ENCODE measurements at regions of chr3 and their contacts with region 1.

Region 1: GRCh38 chr3:149969940-149970715 is 567 bp downstream of the PFN2 start:
- DNase-seq: peak; percentile 75
- ATAC-seq: peak; percentile 27
- H3K4me3 ChIP-seq: peak overlapping the region; percentile 79
- H3K27ac ChIP-seq: peak overlapping the region; percentile 86
- H3K4me1 ChIP-seq: peaks cover 31% of the 10 kb centered on the region
- H3K27me3 ChIP-seq: no peaks in the 10 kb centered on the region
- CTCF ChIP-seq: no peak

Region 2: GRCh38 chr3:149170672-149171071 is 799.5 kb before region 1 on chr3:
- CTCF ChIA-PET with region 1: no interaction called
- POLR2A ChIA-PET with region 1: no interaction called
- intact Hi-C with region 1: no loop called
- DNase-seq: no peak
- ATAC-seq: no peak
- H3K4me3 ChIP-seq: no peak overlapping the region
- H3K27ac ChIP-seq: no peak overlapping the region
- H3K4me1 ChIP-seq: peaks cover 18% of the 10 kb centered on the region
- H3K27me3 ChIP-seq: no peaks in the 10 kb centered on the region
- CTCF ChIP-seq: no peak

Region 3: GRCh38 chr3:149657926-149658733 is 312.0 kb before region 1 on chr3 and contains the start of gene WWTR1:
- CTCF ChIA-PET with region 1: no interaction called
- POLR2A ChIA-PET with region 1: no interaction called
- intact Hi-C with region 1: no loop called
- DNase-seq: peak; percentile 97
- ATAC-seq: peak; percentile 68
- H3K4me3 ChIP-seq: peak within 1 kb of the TSS; percentile 98
- H3K27ac ChIP-seq: peak within 1 kb of the TSS; percentile 95
- H3K4me1 ChIP-seq: peaks cover 39% of the 10 kb centered on the region
- H3K27me3 ChIP-seq: no peaks in the 10 kb centered on the region
- CTCF ChIP-seq: 0 out of 2 replicates have a peak, but pooled peaks have one; percentile 27
- total RNA-seq, gene WWTR1: 74.4 and 79.7 TPM in 2 replicates

Region 4: DNA sequence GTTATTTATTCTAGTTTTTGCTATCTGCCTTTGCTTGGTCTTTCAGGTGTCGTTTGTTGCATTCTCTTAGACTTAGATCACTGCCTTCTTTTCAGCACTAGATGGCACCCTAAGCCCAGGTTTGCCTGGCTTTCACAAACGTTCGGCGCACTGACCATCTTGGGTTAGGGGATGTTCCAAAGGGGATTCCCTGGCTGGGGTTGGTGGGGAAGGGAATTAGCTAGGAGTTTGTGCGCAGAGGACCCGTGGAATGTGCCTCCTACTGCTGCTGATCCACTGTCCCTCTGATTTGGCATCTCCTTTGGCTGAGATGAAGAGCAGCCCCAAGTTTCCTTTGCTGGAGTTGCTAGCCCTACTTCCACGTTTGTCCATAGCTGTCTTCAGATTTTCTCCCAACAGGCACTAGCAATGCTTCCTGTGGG is 33.3 kb before region 1 on chr3:
- CTCF ChIA-PET with region 1: no interaction called
- POLR2A ChIA-PET with region 1: no interaction called
- intact Hi-C with region 1: loop called (anchors 2 kb)
- DNase-seq: peak; percentile 77
- ATAC-seq: peak; percentile 93
- H3K4me3 ChIP-seq: peak overlapping the region; percentile 37; the same call in 1 of the 2 replicates
- H3K27ac ChIP-seq: no peak overlapping the region
- H3K4me1 ChIP-seq: peaks cover 5% of the 10 kb centered on the region; the same call in 1 of the 2 replicates
- H3K27me3 ChIP-seq: no peaks in the 10 kb centered on the region
- CTCF ChIP-seq: peak; percentile 95

Region 5: DNA sequence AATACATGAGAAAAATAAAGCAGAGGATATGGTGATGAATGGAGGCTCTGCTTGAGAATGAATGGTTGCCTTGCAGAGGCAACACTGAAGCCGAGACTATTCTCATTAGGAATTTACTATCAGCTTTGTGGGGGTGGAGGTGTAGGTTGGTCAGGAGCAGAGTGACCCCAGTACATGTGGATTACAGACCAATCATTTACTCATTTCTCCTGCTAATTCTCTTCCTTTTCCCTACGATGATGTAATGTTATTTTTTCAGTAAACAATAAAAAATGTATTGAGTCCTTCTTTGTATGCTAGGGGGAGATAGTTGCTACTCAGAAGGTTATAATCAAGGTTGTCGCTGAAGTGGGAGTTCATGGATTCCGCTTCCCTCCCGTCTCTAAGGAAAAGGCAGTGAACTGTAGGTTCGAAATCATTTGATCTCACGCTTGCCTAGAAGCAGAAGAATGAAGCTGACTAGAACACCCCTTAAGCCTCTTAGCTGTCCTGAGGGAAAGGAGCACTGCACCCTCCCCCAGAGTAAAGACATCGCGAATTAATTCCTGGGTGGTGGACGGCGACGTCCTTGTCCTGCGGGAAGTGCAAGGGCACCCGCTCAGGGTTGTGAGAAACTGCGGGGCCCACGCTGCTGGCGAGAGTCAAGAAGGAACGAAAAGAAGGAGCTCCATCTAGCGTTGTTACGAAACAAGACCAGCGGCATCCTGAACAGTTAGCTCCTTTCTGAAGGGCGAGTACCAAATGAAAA is 213.7 kb after region 1 on chr3:
- CTCF ChIA-PET with region 1: interaction called, 57 read pairs
- POLR2A ChIA-PET with region 1: interaction called, 11 read pairs
- intact Hi-C with region 1: loop called (anchors 1 kb)
- DNase-seq: peak; percentile 86
- ATAC-seq: peak; percentile 95
- H3K4me3 ChIP-seq: peak overlapping the region; percentile 66
- H3K27ac ChIP-seq: peak overlapping the region; percentile 33
- H3K4me1 ChIP-seq: peaks cover 16% of the 10 kb centered on the region
- H3K27me3 ChIP-seq: no peaks in the 10 kb centered on the region
- CTCF ChIP-seq: peak; percentile 92

Region 6: GRCh38 chr3:150238998-150239619 is 269.0 kb after region 1 on chr3:
- CTCF ChIA-PET with region 1: no interaction called
- POLR2A ChIA-PET with region 1: interaction called, 13 read pairs
- intact Hi-C with region 1: no loop called
- DNase-seq: peak; percentile 77
- ATAC-seq: peak; percentile 40
- H3K4me3 ChIP-seq: peak overlapping the region; percentile 61
- H3K27ac ChIP-seq: peak overlapping the region; percentile 95
- H3K4me1 ChIP-seq: peaks cover 46% of the 10 kb centered on the region
- H3K27me3 ChIP-seq: no peaks in the 10 kb centered on the region
- CTCF ChIP-seq: peak; percentile 96

Region 7: DNA sequence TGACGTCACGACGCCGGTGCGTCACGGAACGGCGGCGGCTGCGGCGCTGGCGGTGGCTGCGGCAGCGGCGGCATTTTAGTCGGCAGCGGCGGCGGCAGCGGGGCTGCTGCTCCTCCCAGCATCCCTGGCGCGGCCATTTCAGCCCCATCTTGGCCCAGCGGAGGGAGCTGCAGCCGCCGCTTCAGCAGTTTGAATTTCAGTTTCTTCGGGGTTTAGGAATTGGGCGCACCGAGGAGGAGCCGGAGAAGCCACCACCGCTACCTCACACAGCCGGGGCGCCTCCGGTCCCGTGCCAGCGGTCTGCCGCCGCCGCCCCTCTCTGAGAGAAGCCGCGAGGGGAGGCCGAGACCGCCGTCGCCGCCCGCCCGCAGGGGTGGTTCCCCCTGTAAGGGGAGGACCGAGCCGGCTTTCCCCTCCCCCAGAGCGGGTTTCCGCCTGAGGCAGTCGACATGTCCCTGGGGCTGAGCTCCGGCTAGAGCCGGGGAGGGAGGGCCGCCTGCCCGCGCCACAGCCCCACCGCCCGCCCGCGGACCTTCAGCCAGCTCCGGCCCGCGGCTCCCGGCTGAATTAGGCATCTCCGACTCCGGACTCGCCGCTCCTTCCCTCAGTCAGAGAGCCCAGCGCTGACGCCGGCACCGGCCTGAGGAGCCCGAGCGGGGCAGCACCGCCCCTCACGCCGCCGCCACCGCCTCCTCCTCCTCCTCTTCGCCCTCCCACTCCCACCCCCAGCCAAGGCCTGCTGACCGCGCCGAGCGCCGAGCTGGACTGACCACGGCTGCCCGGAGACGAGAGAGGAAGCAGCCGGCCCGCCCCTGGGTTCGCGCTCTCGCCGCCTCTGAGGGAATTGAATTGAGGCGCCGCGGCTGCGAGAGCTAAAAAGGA is 438.3 kb after region 1 on chr3 and contains the start of gene TSC22D2:
- CTCF ChIA-PET with region 1: no interaction called
- POLR2A ChIA-PET with region 1: no interaction called
- intact Hi-C with region 1: loop called (anchors 5 kb)
- DNase-seq: peak; percentile 95
- ATAC-seq: peak; percentile 64
- H3K4me3 ChIP-seq: peak within 1 kb of the TSS; percentile 87
- H3K27ac ChIP-seq: peak within 1 kb of the TSS; percentile 91
- H3K4me1 ChIP-seq: peaks cover 19% of the 10 kb centered on the region
- H3K27me3 ChIP-seq: no peaks in the 10 kb centered on the region
- CTCF ChIP-seq: peak; percentile 39; the same call in 1 of the 2 replicates
- total RNA-seq, gene TSC22D2: 9.6 and 15.7 TPM in 2 replicates